ENCODE measurements at regions of chr10 and their contacts with region 1.

Region 1: GRCh38 chr10:107144490-107144889 is 20.0 kb downstream of the SORCS1 start:
- DNase-seq: no peak
- ATAC-seq: peak in 1 of 4 donors; percentile 34
- H3K4me3 ChIP-seq: no peak overlapping the region
- H3K27ac ChIP-seq: no peak overlapping the region
- H3K4me1 ChIP-seq: no peaks in the 10 kb centered on the region
- H3K27me3 ChIP-seq: no peaks in the 10 kb centered on the region
- CTCF ChIP-seq: peak in 4 of 12 donors; percentile 9 to 18 (median 12)
- POLR2A ChIP-seq: no peak

Region 2: DNA sequence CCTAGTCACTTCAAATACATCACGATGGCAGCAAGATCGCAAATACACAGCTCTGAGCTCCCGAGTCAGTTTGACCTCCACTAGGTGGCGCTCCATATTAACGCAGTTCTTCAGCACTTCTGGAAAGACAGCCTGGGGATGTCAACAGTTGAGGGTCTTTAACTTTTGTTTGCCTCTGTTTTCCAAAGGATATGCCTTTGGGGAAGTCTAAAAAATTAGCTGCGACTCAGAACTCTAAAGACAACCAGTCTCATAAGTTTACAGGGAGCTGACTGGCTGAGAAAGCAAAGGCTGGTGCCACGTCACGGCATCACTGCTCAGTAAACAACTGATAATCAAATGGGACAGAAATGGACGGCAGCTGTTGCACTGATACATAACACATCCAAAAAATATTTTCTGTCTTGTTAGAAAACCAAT is 438.8 kb before region 1 on chr10:
- intact Hi-C with region 1: loop called in 1 of 10 experiments (anchors 10 kb)
- DNase-seq: peak in 4 of 5 donors; percentile 33 to 49 (median 43)
- ATAC-seq: peak in 3 of 4 donors; percentile 55 to 77 (median 60)
- H3K4me3 ChIP-seq: peak overlapping the region in 4 of 12 donors; percentile 11 to 40 (median 37)
- H3K27ac ChIP-seq: no peak overlapping the region
- H3K4me1 ChIP-seq: no peaks in the 10 kb centered on the region
- H3K27me3 ChIP-seq: peaks cover 0 to 11% (median 0%) of the 10 kb centered on the region in 9 donors
- CTCF ChIP-seq: peak; percentile 57 to 79 (median 74)
- POLR2A ChIP-seq: no peak

Region 3: DNA sequence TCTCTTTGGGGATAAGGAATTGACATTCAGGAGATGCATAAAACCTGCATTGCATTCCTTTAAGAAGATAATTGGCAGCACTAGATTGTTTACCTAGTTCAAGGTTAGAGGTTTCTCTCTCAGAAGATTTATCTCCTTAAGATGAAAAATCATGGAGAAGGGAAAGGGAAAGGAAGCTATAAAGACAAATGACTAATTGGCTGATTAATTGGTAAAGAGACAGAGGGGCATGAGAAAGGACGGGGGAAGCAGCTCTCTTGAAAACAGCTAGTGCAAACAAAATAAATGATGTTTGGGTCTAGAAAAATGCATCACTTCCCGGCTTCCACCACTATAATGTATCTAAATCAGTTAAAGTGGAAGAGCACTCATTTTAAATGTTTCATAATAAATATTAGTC is 1837.7 kb after region 1 on chr10:
- intact Hi-C with region 1: no loop called
- DNase-seq: no peak
- ATAC-seq: no peak
- H3K4me3 ChIP-seq: no peak overlapping the region
- H3K27ac ChIP-seq: no peak overlapping the region
- H3K4me1 ChIP-seq: no peaks in the 10 kb centered on the region
- H3K27me3 ChIP-seq: no peaks in the 10 kb centered on the region
- CTCF ChIP-seq: no peak
- POLR2A ChIP-seq: no peak